HEK293T (cell line): ENCODE measurements at regions of chr1 and their contacts with region 1.

Region 1: GRCh38 chr1:33633019-33633801 is 160.8 kb downstream of the ZSCAN20 start:
- DNase-seq: peak; percentile 97

Region 2: DNA sequence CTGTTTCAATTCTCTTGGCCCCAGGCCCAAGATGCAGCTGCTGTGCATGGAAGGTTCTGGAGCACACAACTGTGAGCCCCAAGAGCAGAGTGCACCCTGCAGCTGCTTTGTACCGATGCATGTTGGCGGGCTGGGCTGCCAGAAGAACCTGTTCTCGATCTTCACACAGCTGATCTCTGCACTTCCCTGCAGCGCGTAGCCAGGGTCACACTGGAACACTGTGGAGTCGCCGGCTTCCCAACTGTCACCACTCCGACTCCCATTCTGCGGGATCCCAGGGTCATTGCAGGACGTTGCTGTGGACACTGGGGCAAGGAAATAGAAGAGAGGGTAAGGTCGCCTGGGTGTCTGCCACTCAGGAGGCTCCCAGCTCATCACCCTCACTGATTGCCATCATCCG is 24.6 kb after region 1 on chr1:
- CTCF ChIA-PET with region 1: no interaction called
- POLR2A ChIA-PET with region 1: no interaction called
- DNase-seq: no peak

Region 3: DNA sequence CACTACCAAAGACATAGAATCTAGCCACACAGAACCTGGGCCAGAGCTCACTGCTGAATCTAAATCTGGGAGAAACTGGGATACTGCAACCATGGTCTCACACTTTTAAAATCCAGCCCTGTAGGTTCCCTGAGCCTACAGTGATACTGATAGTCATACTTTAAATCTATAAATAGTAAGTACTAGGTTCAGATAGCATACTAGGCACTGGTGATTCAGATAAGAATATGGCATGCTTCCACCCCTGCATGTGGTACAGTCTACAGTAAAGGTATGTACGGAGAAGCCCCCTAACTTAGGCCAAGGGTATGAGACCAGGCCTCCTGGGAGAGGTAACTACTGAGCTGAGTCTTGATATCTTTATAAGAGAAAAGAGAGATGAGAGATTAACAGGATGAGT is 37.4 kb after region 1 on chr1:
- CTCF ChIA-PET with region 1: no interaction called
- POLR2A ChIA-PET with region 1: no interaction called
- DNase-seq: no peak

Region 4: GRCh38 chr1:33683913-33684312 is 50.7 kb after region 1 on chr1:
- CTCF ChIA-PET with region 1: no interaction called
- POLR2A ChIA-PET with region 1: no interaction called
- DNase-seq: no peak

Region 5: DNA sequence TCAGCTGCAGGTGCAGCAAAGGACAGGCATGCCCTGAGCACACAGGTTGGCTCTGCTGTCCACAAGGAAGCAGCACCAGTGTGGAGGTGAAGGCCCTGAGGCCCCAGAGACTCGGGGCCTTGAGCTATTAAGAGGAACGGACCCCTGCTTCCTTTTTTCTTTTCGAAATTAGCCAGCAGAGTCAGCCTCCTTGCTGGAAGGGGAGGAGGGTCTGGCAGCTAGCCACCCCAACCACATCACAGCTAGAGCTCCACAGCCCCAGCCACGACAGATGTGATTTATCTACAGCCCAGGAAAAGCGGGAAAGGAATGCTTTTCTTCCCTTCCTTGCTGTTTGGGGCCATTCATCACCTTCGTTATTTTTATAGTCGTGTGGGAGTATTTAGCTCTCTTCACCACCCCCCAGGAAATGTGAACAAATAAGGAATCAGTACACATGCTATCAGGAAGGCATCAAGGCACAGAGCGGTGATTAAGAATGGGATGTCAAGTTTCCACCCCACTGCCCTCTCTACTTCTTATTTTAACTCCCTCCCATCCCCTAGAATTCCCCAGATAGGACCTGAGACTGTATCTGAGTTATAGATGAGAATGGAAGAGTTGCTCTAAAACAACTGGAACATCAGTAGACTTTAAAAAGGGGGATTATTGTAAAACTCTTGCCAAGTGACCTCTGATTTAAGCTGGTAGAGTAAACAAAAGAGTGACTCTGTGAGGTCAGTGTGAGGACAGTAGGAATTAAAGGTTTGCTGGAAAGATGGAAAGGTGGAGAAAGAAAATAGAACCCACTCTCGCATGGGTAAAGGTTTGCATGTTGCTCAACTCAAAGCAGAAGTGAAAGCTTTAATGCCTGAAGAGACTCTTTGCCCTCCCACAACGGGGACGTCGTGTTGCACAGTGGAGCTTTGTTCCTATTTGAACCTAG is 897.0 kb after region 1 on chr1:
- CTCF ChIA-PET with region 1: interaction called, 10 read pairs
- POLR2A ChIA-PET with region 1: no interaction called
- DNase-seq: no peak

Region 6: GRCh38 chr1:34597877-34598514 is 964.8 kb after region 1 on chr1:
- CTCF ChIA-PET with region 1: interaction called, 11 read pairs
- POLR2A ChIA-PET with region 1: no interaction called
- DNase-seq: peak; percentile 75